Activated CD8-positive, alpha-beta T cell treated with anti-CD3 and anti-CD28 coated beads for 36 hours (primary cell): ENCODE measurements at regions of chr21 and their contacts with region 1.

Region 1: DNA sequence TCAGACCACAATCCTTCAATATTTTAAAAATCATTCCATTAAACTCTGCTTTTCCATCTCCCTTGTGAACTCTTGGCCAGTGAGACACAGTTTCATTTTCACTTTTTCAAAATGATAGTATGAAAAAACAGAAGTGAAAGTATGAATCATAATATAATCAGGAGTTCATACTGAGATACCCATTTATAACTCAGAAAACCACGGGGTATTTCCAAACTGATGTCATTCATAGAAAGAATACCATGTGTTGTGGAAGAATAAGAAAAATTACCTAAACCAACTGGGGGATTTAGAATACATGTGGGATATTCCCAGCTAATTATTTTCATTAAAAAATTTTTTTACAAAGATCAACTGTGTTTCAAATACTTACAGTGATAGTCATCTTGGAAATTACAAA is 149.9 kb downstream of the MRPL39 start:
- DNase-seq: no peak
- ATAC-seq: peak; percentile 47
- H3K4me3 Mint-ChIP-seq: peak overlapping the region; percentile 69
- H3K27ac Mint-ChIP-seq: peak overlapping the region; percentile 92
- H3K4me1 Mint-ChIP-seq: peaks cover 83% of the 10 kb centered on the region
- H3K27me3 Mint-ChIP-seq: no peaks in the 10 kb centered on the region
- CTCF ChIP-seq: no peak

Region 2: DNA sequence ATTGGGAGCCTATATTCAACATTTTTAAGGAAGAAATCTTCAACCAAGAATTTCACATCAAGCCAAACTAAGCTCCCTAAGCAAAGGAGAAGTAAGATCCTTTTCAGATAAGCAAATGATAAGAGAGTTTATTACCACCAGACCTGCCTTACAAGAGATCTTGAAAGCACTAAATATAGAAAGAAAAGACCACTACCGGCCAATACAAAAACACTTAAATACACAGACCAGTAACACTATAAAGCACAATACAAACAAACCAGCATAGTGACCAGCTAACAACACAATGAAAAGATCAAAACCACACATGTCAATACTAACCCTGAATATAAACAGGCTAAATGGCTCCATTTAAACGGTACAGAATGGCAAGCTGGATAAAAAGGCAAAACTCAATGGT is 15.6 kb before region 1 on chr21:
- CTCF ChIA-PET with region 1: interaction called, 4 read pairs
- POLR2A ChIA-PET with region 1: interaction called, 12 read pairs
- intact Hi-C with region 1: no loop called
- DNase-seq: no peak
- ATAC-seq: no peak
- H3K4me3 Mint-ChIP-seq: no peak overlapping the region
- H3K27ac Mint-ChIP-seq: no peak overlapping the region
- H3K4me1 Mint-ChIP-seq: no peaks in the 10 kb centered on the region
- H3K27me3 Mint-ChIP-seq: no peaks in the 10 kb centered on the region
- CTCF ChIP-seq: no peak

Region 3: DNA sequence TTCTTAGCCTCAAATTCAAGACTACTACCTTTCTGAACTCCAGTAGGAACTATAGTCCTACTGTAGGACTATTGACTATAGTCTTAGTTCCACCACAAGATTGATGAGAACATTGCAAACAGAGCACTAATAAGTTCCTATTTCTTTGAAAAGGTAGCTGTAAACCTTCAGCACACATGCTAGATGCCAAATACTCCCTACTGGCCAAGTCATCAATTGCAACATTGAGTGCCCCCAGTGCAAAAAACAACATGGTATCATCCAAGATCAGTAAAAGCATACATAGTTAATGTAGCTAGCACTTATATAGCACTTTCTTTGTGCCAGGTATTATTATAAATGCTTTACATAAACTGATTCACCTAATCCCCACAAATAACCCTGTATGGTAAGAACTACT is 50.1 kb after region 1 on chr21:
- CTCF ChIA-PET with region 1: interaction called, 12 read pairs
- POLR2A ChIA-PET with region 1: interaction called, 6 read pairs
- intact Hi-C with region 1: loop called (anchors 5 kb)
- DNase-seq: peak; percentile 46
- ATAC-seq: peak; percentile 43
- H3K4me3 Mint-ChIP-seq: peak overlapping the region; percentile 50
- H3K27ac Mint-ChIP-seq: peak overlapping the region; percentile 55
- H3K4me1 Mint-ChIP-seq: peaks cover 63% of the 10 kb centered on the region
- H3K27me3 Mint-ChIP-seq: no peaks in the 10 kb centered on the region
- CTCF ChIP-seq: peak; percentile 28

Region 4: DNA sequence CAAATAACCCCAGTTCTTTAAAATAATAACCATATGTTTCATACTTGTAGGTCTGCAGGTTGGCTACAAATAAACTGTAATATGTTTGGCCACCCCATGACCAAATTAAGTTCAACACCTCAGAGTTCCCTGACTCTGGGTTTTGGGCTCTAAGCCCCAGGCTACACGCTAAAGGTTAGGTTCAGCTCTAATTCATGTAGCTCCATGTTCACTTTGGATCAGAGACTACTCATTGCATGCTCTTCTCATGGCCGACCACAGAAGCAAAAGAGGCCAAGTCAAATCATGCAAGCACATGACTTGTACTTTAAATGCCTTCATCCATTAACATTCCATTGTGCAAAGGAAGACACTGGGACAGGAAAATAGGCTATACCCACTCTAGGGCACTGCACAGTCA is 83.6 kb after region 1 on chr21:
- CTCF ChIA-PET with region 1: no interaction called
- POLR2A ChIA-PET with region 1: no interaction called
- intact Hi-C with region 1: no loop called
- DNase-seq: no peak
- ATAC-seq: no peak
- H3K4me3 Mint-ChIP-seq: no peak overlapping the region
- H3K27ac Mint-ChIP-seq: no peak overlapping the region
- H3K4me1 Mint-ChIP-seq: peaks cover 3% of the 10 kb centered on the region
- H3K27me3 Mint-ChIP-seq: no peaks in the 10 kb centered on the region
- CTCF ChIP-seq: no peak